Activated naive CD4-positive, alpha-beta T cell treated with anti-CD3 and anti-CD28 coated beads, Interleukin-2, amount 10 ng/mL, durations not matched to agents 7 days and 5 days (primary cell): ENCODE measurements at regions of chr2 and their contacts with region 1.

Region 1: GRCh38 chr2:120174963-120175581 is 48.1 kb downstream of the TMEM185B start:
- DNase-seq: no peak
- H3K4me3 Mint-ChIP-seq: no peak overlapping the region
- H3K27ac Mint-ChIP-seq: peak overlapping the region; percentile 50
- H3K4me1 Mint-ChIP-seq: peaks cover 50% of the 10 kb centered on the region
- H3K27me3 Mint-ChIP-seq: no peaks in the 10 kb centered on the region

Region 2: DNA sequence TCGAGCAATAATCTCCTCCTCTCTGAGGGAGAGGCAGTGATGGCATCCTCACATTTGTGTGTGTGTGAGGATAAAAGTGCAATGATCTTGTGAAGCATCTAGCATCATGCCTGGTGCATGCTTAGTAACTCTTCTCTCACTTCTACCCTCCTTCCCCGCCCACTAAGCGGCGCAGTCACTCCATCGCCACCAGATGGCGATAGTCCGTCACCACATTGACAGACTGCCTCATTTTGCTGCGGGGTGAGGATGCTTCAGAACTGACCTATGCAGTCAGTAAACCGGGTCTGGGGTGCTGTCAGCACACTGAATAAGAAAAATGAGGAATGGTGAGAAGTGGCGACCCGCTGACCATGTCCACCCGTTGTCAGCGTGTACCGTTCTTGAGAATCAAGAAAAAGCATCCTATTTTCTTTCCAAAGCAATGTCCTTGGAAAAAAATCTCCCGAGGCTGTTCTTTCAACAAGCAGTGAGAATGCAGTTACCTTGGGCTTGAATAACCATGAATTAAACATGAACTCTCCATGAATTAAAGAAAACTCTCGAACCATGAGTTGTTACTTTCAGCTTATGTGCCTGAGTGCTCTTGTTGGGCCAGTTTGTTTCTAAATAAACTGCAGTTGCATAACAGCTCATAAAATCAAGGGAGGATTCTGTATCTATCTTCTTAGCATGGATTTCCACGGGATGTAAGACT is 533.4 kb before region 1 on chr2:
- CTCF ChIA-PET with region 1: interaction called, 44 read pairs
- DNase-seq: peak; percentile 81
- H3K4me3 Mint-ChIP-seq: no peak overlapping the region
- H3K27ac Mint-ChIP-seq: no peak overlapping the region
- H3K4me1 Mint-ChIP-seq: no peaks in the 10 kb centered on the region
- H3K27me3 Mint-ChIP-seq: peaks cover 17% of the 10 kb centered on the region

Region 3: DNA sequence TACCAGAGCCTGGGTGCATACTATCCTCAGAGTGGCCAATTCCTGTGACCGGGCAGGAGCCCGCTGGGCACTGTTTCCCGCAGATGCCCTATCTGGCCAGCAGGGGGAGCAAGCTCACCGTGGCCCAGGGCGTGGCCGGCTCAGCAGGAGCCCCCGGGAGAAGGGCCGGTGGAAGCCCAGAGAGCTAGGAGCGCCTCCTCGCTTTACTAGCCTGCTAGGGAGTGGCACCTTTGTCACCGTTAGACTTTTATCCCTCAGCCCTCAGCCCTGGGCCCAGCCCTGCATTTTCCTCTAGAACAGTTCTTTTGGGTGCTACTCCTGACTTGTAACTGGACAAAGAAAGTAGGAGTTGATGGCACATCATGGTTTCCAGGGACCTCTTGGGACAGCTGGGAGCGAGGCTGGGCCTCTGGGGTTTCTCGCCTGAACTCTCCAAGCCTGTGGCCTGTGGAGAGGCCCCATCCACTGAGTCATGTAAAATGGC is 472.1 kb before region 1 on chr2:
- CTCF ChIA-PET with region 1: interaction called, 32 read pairs
- DNase-seq: peak; percentile 74
- H3K4me3 Mint-ChIP-seq: no peak overlapping the region
- H3K27ac Mint-ChIP-seq: no peak overlapping the region
- H3K4me1 Mint-ChIP-seq: peaks cover 10% of the 10 kb centered on the region
- H3K27me3 Mint-ChIP-seq: peaks cover 19% of the 10 kb centered on the region

Region 4: GRCh38 chr2:119826370-119826961 is 348.6 kb before region 1 on chr2:
- CTCF ChIA-PET with region 1: interaction called, 18 read pairs
- DNase-seq: peak; percentile 63
- H3K4me3 Mint-ChIP-seq: no peak overlapping the region
- H3K27ac Mint-ChIP-seq: no peak overlapping the region
- H3K4me1 Mint-ChIP-seq: peaks cover 14% of the 10 kb centered on the region
- H3K27me3 Mint-ChIP-seq: no peaks in the 10 kb centered on the region

Region 5: GRCh38 chr2:120206022-120206581 is 31.0 kb after region 1 on chr2:
- CTCF ChIA-PET with region 1: interaction called, 10 read pairs
- DNase-seq: peak; percentile 55
- H3K4me3 Mint-ChIP-seq: no peak overlapping the region
- H3K27ac Mint-ChIP-seq: no peak overlapping the region
- H3K4me1 Mint-ChIP-seq: peaks cover 11% of the 10 kb centered on the region
- H3K27me3 Mint-ChIP-seq: no peaks in the 10 kb centered on the region

Region 6: DNA sequence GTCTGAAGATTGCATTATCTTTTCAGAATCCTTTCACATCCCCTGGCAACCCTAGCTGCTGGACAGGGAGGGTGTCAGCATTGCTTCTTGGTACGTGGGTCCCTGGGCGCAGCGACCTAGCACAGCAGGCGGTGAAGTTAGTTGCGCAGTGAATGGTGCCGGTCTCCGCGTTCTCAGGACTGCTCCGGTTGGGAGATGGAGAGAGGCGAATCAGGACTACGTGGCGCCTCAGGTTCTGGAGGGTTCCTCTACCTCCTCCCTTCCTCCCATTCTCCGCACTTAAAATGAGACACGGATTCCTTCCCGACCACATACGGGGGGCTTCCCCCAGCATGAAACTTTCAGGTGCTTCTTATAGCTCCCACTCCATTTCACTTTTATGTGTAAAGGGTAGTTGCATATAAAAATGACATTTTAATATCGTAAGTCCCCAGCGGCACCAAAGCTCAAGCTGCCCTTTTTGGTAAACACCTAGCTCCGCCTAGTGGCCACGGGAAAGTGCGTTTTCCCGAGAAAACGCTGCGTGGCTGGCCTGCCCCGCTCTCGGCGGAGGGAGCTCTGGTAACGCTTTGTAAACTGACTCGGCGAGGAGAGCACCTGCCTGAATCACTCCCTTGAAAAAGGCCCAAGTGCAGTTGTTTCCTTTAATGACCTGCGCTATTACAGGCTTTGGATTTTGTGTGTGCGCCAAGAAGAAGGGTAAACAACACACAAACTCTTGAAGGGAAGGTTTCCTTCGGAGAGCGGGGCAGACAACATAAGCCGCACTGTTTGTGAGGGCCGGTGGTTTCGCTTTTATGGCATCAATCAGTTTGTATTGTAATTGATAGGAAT is 138.0 kb after region 1 on chr2:
- CTCF ChIA-PET with region 1: interaction called, 74 read pairs
- DNase-seq: peak; percentile 88
- H3K4me3 Mint-ChIP-seq: peak overlapping the region; percentile 64
- H3K27ac Mint-ChIP-seq: peak overlapping the region; percentile 79
- H3K4me1 Mint-ChIP-seq: peaks cover 53% of the 10 kb centered on the region
- H3K27me3 Mint-ChIP-seq: peaks cover 11% of the 10 kb centered on the region

Region 7: DNA sequence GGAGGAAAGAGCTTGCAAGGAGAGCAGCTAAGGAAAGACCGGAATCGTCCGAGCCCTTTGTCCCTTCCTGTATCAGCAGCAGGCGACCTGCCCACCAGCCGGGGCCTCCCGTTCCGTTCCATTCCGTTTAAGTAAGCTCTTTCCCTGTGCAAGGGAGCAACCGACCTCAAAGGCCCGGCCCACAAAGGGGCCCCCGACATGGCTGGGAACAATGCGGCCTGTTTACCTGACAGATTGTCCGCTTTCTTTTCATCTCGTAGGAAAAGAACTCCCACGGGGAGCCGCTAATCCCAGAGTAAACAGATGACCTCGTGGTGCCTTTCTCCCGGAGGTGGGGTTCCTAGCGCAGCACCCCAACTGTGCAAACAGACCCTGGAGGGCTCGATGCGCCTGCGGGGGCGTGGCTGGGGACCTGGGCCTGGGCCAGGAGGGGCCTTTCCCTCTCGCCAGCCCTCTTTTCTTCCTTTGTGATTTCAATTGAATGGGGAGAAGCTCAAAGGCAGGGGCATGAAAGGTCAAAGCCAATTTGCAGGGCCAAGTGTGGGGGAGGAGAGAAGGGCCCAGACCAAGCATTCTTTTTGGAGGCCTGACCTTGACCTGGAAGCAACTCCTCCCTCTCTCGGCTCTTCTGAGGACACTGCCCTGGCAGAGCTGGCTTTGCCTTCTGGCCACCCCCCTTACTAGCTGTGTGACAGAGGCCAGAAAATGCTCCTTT is 291.1 kb after region 1 on chr2:
- CTCF ChIA-PET with region 1: no interaction called
- DNase-seq: no peak
- H3K4me3 Mint-ChIP-seq: no peak overlapping the region
- H3K27ac Mint-ChIP-seq: no peak overlapping the region
- H3K4me1 Mint-ChIP-seq: no peaks in the 10 kb centered on the region
- H3K27me3 Mint-ChIP-seq: peaks cover 44% of the 10 kb centered on the region